Esophagus squamous epithelium (tissue), 5 donors: ENCODE measurements at regions of chr4 and their contacts with region 1.

Region 1: DNA sequence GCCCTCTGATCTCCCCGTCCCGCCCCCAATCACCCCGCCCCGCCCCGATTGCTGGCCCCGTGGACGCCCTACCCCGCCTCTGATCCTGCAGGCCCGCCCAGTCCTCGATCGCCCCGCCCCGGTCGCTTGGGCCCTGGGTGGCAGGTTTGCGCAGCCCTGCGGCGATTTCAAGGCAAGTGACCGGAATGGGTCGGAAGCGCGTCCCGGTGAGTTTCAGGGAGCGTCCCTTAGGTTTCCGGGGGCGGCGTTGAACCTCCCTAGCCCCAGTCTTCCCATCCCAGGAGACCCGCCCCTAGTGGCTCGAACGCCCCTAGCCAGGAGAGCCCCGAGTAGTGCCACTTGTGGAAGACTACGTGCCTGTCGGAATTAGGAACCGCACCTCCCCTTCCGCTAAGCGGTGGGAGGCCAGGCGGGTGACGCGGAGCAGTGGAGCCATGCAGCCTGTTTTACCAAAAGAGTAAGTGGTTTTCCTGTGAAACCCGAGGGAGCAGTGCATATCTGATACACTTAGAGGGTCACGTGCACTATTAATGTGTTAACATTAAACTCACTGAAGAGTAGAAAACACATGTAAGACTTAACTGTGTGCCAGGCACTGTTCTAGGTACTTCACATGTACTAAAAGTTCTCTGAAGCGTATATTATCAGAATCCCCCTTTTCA is 354 bp upstream of the TEC start:
- DNase-seq: peak; percentile 86
- H3K4me3 ChIP-seq: peak overlapping the region; percentile 77 to 98 (median 90)
- H3K27ac ChIP-seq: peak overlapping the region; percentile 91 to 97 (median 94)
- H3K4me1 ChIP-seq: peaks cover 0 to 29% (median 6%) of the 10 kb centered on the region in 3 donors
- H3K27me3 ChIP-seq: no peaks in the 10 kb centered on the region
- CTCF ChIP-seq: peak in 3 of 6 experiments; percentile 15 to 39 (median 32)
- POLR2A ChIP-seq: no peak

Region 2: DNA sequence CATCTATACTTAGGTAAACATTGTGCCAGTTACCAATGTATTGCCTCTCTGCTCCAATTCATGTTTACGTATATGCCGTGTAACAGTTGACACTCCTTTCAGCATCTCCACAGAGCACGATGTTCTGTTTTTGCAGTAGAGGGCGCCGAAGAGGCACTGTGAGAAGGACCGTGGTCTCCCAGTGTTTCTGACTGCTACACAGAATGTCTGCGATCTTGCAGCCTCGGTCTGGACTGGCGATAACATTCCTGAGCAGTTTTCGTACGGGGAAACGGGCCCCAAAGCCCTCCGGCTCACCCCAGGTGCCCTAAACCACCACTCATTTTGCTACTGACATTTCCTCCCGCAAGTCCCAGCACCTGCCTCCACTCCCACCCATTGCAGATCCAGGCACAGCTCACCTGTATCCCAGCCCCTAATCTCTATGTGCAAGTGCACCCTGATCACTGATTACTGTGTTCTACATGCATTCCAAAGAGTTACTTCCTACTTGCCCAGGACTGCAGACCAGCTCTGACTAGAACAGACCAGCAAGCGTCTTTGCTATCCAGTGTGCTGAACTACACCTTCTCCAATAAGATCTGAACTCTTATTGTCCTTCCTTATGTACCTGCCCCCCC is 343.2 kb before region 1 on chr4:
- intact Hi-C with region 1: no loop called
- DNase-seq: no peak
- H3K4me3 ChIP-seq: peak overlapping the region in 1 of 4 donors; percentile 31
- H3K27ac ChIP-seq: no peak overlapping the region
- H3K4me1 ChIP-seq: peaks cover 0 to 6% (median 5%) of the 10 kb centered on the region in 3 donors
- H3K27me3 ChIP-seq: peaks cover 0 to 20% (median 0%) of the 10 kb centered on the region in 4 donors
- CTCF ChIP-seq: peak; percentile 22 to 58 (median 43)
- POLR2A ChIP-seq: no peak

Region 3: DNA sequence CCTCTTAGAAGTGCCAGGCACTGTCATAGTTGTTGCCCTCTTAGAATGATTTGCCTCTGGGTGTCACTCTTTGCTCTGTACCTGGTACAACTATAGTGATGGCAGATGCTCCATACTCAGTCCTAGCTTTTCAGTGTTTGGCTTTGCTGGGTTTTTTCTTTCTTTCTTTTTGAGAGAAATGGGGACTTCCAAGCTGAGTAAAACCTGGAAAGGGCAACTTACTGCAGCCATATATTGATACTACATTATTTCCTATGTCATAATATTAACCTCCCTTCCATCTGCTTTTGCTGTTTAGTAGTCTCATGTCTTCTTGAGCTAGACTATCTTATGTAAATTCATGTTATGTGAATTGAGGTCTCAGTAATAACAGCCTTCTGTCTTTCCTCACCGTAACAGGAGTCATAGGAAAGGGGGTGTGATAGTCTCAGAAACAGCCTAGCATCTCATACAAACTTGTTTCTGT is 204.4 kb before region 1 on chr4:
- intact Hi-C with region 1: no loop called
- DNase-seq: no peak
- H3K4me3 ChIP-seq: no peak overlapping the region
- H3K27ac ChIP-seq: no peak overlapping the region
- H3K4me1 ChIP-seq: no peaks in the 10 kb centered on the region
- H3K27me3 ChIP-seq: no peaks in the 10 kb centered on the region
- CTCF ChIP-seq: no peak
- POLR2A ChIP-seq: no peak

Region 4: DNA sequence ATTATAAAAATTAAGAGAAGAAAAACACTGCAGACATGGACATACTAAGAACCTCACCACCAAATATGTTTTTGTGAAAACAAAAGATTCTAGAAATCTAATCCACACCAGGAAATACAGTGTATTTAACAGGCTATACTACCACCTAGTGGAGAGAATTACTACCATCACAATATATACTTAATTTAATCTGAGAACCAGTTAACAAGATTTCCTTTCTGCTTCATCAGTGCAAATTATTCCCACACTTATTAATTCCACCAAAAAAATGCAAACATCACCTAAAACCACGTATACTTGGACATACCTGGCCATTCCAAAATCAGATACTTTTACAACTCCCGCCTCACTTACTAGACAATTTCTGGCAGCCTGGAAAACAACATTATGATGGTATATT is 128.9 kb before region 1 on chr4:
- intact Hi-C with region 1: loop called (anchors 10 kb)
- DNase-seq: no peak
- H3K4me3 ChIP-seq: no peak overlapping the region
- H3K27ac ChIP-seq: no peak overlapping the region
- H3K4me1 ChIP-seq: no peaks in the 10 kb centered on the region
- H3K27me3 ChIP-seq: no peaks in the 10 kb centered on the region
- CTCF ChIP-seq: peak in 5 of 6 experiments; percentile 31 to 65 (median 62)
- POLR2A ChIP-seq: no peak

Region 5: DNA sequence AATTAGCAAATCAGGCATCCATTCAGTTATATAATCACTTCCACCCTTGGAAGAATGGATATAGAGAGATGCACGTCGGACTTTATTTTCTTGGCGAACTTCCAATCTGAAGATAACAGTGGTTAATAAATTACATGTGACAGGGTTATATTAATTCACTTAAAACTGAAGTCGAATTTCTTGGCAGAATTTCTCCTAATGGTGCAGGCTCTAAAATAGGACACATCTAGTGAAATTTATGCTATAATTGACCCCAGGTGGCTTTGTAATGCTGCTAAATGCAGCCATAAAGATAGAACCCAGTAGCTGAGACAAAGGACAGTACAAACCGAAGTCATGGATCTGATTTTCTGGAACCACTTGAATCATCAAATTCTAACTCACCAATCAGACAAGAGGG is 192.4 kb after region 1 on chr4:
- intact Hi-C with region 1: no loop called
- DNase-seq: no peak
- H3K4me3 ChIP-seq: no peak overlapping the region
- H3K27ac ChIP-seq: no peak overlapping the region
- H3K4me1 ChIP-seq: no peaks in the 10 kb centered on the region
- H3K27me3 ChIP-seq: no peaks in the 10 kb centered on the region
- CTCF ChIP-seq: no peak
- POLR2A ChIP-seq: no peak